ENCODE measurements at regions of chr5 and their contacts with region 1.

Region 1: DNA sequence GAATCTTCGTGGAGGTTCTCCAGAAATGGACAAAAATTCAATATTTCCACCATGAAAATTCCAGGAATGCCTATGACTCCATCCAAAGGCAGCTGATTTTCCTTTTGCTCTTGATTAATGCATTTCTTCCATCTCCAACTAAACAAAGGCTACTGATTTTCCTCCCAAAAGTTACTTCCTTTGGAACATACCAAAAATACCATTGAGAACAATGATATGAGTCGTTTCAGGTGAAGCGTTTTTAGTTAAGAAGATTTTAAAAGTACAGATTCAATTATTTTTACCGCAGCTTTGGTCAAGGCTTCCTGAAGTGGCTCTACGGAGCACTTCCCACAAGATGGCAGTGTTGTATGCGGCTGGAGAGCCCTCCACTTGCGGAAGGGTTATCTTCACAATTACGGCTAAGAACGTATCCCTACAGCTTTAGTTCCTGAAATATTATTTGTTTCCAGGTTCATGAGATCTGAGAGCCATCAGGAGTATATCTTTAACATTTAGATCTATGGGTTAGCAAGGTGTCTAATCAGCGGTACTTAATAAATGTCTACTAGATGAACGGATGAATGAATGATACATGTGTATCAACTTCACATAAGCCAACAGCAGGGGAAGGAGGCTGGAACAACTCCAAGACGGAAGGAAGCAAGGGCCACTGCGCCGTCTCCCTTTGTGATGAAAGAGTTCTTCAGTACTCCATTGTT is 35.9 kb upstream of the ARSB start:
- DNase-seq: peak in 13 of 14 experiments; percentile 3 to 59 (median 13)
- ATAC-seq: no peak
- H3K4me3 ChIP-seq: no peak overlapping the region
- H3K4me3 Mint-ChIP-seq: no peak overlapping the region
- H3K27ac ChIP-seq: no peak overlapping the region
- H3K27ac Mint-ChIP-seq: no peak overlapping the region
- H3K4me1 ChIP-seq: peaks cover 4% of the 10 kb centered on the region
- H3K4me1 Mint-ChIP-seq: peaks cover 10% of the 10 kb centered on the region
- H3K27me3 ChIP-seq: peaks cover 18 to 29% of the 10 kb centered on the region in 2 experiments
- H3K27me3 Mint-ChIP-seq: peaks cover 89% of the 10 kb centered on the region
- CTCF ChIP-seq: peak; percentile 67

Region 2: DNA sequence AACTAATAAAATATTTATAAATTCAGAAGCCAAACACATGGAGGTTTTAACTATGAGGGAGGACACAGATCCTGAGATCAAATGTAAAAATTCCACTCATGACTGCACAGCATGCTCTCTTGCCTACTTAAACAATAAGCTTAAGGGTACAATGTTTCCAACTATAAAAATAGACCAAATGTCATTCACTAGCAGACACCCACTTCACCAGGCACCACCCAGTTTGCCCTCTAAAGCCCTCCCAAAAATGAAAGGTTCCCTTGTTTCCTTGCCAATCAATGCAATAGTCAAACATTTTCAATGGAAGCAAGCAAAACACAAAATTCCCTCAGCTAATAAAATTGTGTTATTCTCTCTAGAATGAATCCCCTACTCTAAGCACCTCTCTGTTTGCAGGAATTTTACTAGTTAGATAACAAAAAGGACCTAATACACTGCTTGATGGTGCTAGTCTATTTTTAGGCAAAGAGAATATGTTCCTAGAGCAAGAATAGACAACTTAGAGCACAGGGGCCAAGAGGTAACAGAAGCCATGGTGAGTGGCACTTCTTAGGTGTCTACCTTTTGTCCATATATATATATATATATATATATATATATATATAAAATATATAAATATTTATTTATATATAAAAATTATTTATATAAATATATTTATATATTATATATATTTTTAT is 357.6 kb after region 1 on chr5:
- CTCF ChIA-PET with region 1: no interaction called
- POLR2A ChIA-PET with region 1: no interaction called
- intact Hi-C with region 1: no loop called
- DNase-seq: no peak
- ATAC-seq: no peak
- H3K4me3 ChIP-seq: no peak overlapping the region
- H3K4me3 Mint-ChIP-seq: no peak overlapping the region
- H3K27ac ChIP-seq: no peak overlapping the region
- H3K27ac Mint-ChIP-seq: no peak overlapping the region
- H3K4me1 ChIP-seq: no peaks in the 10 kb centered on the region
- H3K4me1 Mint-ChIP-seq: no peaks in the 10 kb centered on the region
- H3K27me3 ChIP-seq: no peaks in the 10 kb centered on the region
- H3K27me3 Mint-ChIP-seq: no peaks in the 10 kb centered on the region
- CTCF ChIP-seq: no peak

Region 3: GRCh38 chr5:79464695-79465332 is 443.8 kb after region 1 on chr5:
- CTCF ChIA-PET with region 1: interaction called, 3 read pairs
- POLR2A ChIA-PET with region 1: no interaction called
- intact Hi-C with region 1: loop called in 1 of 2 experiments (anchors 5 kb)
- DNase-seq: peak in 3 of 14 experiments; percentile 29 to 41 (median 30)
- ATAC-seq: peak; percentile 43
- H3K4me3 ChIP-seq: no peak overlapping the region
- H3K4me3 Mint-ChIP-seq: no peak overlapping the region
- H3K27ac ChIP-seq: no peak overlapping the region
- H3K27ac Mint-ChIP-seq: no peak overlapping the region
- H3K4me1 ChIP-seq: no peaks in the 10 kb centered on the region
- H3K4me1 Mint-ChIP-seq: peaks cover 4% of the 10 kb centered on the region
- H3K27me3 ChIP-seq: no peaks in the 10 kb centered on the region
- H3K27me3 Mint-ChIP-seq: peaks cover 5% of the 10 kb centered on the region
- CTCF ChIP-seq: peak; percentile 57

Region 4: DNA sequence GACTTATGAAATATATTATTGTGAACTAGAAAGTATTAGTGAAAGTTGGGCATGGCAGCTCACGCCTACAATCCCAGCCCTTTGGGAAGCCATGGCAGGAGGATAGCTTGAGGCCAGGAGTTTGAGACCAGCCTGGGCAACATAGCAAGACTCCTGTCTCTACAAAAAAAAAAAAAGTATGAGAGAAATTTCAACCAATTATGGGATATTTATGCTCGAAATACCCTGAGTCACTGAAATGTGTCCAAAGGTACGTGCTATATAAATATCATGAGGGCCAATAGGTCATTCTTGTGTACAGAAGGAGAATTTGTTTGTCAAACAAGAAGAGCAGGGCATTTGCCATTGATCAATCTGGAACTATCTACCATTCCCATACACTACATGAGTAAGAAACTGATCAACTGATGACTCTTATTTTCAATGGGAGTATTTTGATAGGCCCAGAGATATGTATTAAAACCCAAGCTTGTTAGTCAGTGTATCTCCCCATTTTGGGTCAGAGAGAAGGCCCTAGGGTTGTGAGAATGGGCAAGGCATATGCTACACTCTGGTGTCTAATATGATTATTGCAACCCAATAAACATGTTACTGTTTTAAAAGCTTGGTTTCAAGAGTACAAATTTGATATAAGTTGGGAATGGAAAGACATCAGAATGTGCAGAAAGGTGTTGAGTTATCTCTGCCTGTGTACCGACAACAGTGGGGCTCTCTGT is 514.6 kb after region 1 on chr5:
- CTCF ChIA-PET with region 1: no interaction called
- POLR2A ChIA-PET with region 1: no interaction called
- intact Hi-C with region 1: loop called in 1 of 2 experiments (anchors 2 kb)
- DNase-seq: peak in 2 of 14 experiments; percentile 15 to 17
- ATAC-seq: no peak
- H3K4me3 ChIP-seq: no peak overlapping the region
- H3K4me3 Mint-ChIP-seq: no peak overlapping the region
- H3K27ac ChIP-seq: no peak overlapping the region
- H3K27ac Mint-ChIP-seq: no peak overlapping the region
- H3K4me1 ChIP-seq: no peaks in the 10 kb centered on the region
- H3K4me1 Mint-ChIP-seq: no peaks in the 10 kb centered on the region
- H3K27me3 ChIP-seq: no peaks in the 10 kb centered on the region
- H3K27me3 Mint-ChIP-seq: peaks cover 21% of the 10 kb centered on the region
- CTCF ChIP-seq: no peak

Region 5: DNA sequence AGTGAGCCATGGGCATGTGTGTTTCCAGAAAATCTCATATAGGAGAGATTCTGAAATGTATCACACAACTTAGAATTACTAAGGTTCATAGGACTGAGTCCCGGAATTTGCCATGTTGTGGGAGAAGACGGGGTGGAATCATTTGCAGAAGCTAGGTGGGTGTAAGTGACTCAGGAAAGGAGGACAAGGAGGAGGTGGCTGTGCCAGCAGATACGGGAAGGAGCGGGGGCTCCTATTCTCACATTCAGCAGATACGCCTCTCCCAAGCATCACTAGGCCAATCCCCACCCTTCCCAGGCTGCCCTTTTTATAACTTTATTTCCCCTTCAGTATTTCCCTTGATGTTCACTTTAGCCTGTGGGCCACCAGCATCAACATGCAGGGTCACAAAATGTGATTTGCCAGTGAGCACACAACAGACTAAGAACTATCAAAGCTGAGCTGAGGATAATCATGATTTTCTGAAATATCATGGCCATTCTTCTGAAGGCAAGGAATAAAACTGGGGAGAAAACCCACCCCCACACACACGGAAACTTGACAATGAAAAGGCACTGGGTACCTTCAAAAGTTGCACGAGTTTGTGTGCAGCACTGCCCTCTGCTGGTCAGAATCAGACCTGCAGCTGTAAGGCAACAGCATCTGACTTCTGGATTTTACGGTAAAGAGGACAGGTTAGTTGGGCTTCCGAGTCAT is 836.9 kb after region 1 on chr5:
- CTCF ChIA-PET with region 1: interaction called, 3 read pairs
- POLR2A ChIA-PET with region 1: no interaction called
- intact Hi-C with region 1: loop called (anchors 5 kb)
- DNase-seq: peak; percentile 58 to 86 (median 77)
- ATAC-seq: peak; percentile 65
- H3K4me3 ChIP-seq: no peak overlapping the region
- H3K4me3 Mint-ChIP-seq: no peak overlapping the region
- H3K27ac ChIP-seq: no peak overlapping the region
- H3K27ac Mint-ChIP-seq: no peak overlapping the region
- H3K4me1 ChIP-seq: no peaks in the 10 kb centered on the region
- H3K4me1 Mint-ChIP-seq: peaks cover 4% of the 10 kb centered on the region
- H3K27me3 ChIP-seq: peaks cover 0 to 3% of the 10 kb centered on the region in 2 experiments
- H3K27me3 Mint-ChIP-seq: peaks cover 6% of the 10 kb centered on the region
- CTCF ChIP-seq: peak; percentile 96

Measured in CD4-positive, alpha-beta T cell (primary cell).